Activated CD4-positive, alpha-beta T cell treated with anti-CD3 and anti-CD28 coated beads, Interleukin-2, amount 10 ng/mL, durations not matched to agents 24 days and 14 days (primary cell): ENCODE measurements at regions of chr12 and their contacts with region 1.

Region 1: DNA sequence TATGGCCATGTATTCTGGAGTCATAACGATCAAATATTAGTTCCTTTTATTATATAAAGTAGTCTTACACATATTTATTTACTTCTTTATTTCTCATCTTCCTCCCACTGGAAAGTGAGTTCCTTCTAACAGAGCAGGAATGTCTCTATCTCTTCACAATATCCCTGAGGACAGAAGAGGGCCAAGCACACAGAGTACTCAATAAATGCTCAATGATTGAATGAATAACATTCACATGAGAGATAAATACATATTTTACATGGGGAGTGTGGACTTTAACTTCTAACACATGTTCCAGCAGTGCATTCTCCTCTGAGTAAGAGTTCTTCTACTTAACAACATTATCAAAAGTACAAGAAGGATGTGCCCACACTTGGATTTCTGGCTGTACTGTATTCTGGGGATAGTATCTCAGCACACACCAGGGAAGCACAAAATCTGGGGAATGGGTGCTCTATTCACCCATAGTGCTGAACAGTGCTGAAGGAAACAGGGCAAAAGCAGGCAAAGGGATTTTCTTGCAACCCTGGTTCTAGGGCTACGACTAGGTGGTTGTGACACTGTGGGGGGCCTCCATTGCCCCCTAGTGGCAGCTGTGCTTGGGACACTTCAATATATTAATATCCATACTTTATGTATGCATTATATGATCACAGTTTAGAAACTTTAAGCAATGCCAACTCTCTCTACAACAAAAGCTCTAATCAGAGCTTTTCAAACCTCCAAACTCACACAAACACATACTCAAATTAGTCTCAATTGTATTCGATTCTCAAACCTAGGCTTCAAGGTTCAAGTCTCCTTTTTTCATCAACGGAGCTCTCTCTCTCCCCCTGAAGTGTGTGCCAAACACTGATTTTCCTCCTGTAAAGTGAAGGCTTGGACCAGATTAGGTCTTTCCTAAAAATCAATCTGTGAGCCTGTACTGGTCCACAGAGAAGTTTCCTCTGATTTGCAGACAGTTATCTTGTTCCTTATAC is 115.5 kb downstream of the SLC2A13 start:
- DNase-seq: peak; percentile 83
- H3K4me3 Mint-ChIP-seq: no peak overlapping the region
- H3K27ac Mint-ChIP-seq: no peak overlapping the region
- H3K4me1 Mint-ChIP-seq: no peaks in the 10 kb centered on the region
- H3K27me3 Mint-ChIP-seq: peaks cover 4% of the 10 kb centered on the region

Region 2: DNA sequence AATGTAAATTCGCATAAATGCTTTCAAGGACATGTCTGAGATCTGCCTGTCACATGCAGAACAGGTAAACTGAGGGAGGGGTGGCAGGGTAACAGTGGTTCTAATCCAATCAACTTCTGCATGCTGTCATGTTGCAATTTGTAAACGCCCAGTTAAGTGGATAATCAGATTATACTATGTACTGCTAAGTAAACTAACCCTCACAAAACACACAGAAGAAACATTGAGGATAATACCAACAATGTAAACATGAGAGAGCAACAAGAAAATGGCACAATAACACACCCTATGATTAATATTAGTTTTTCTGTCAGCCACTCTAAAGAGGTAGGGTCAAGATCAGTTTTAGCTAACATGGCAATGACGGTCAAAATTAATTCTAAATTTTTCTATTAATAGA is 671.2 kb before region 1 on chr12:
- intact Hi-C with region 1: loop called (anchors 10 kb)
- DNase-seq: no peak
- H3K4me3 Mint-ChIP-seq: no peak overlapping the region
- H3K27ac Mint-ChIP-seq: no peak overlapping the region
- H3K4me1 Mint-ChIP-seq: no peaks in the 10 kb centered on the region
- H3K27me3 Mint-ChIP-seq: no peaks in the 10 kb centered on the region

Region 3: DNA sequence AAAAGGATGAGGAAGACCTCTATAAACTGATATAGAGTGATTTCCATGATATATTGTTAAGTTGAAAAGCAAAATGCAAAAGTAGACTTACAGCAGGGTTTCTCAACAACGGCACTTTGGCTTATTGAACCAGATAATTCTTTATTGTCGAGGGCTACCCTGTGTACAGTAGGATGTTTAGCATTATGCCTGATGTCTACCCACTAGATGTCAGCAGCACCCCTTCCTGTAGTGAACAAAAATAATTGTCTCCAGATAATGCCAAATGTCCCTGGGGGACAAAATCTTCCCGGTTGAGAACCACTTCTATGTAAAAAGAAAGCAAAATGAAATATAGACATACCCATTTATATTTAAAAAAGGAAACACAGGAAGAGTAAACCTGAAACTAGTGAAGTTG is 403.2 kb before region 1 on chr12:
- intact Hi-C with region 1: loop called (anchors 5 kb)
- DNase-seq: peak; percentile 66
- H3K4me3 Mint-ChIP-seq: no peak overlapping the region
- H3K27ac Mint-ChIP-seq: no peak overlapping the region
- H3K4me1 Mint-ChIP-seq: peaks cover 12% of the 10 kb centered on the region
- H3K27me3 Mint-ChIP-seq: no peaks in the 10 kb centered on the region

Region 4: GRCh38 chr12:39764944-39765560 is 225.4 kb before region 1 on chr12:
- intact Hi-C with region 1: loop called (anchors 1 kb)
- DNase-seq: no peak
- H3K4me3 Mint-ChIP-seq: no peak overlapping the region
- H3K27ac Mint-ChIP-seq: no peak overlapping the region
- H3K4me1 Mint-ChIP-seq: no peaks in the 10 kb centered on the region
- H3K27me3 Mint-ChIP-seq: peaks cover 4% of the 10 kb centered on the region

Region 5: GRCh38 chr12:40107098-40107802 is 116.8 kb after region 1 on chr12:
- intact Hi-C with region 1: no loop called
- DNase-seq: peak; percentile 95
- H3K4me3 Mint-ChIP-seq: peak overlapping the region; percentile 63
- H3K27ac Mint-ChIP-seq: no peak overlapping the region
- H3K4me1 Mint-ChIP-seq: peaks cover 31% of the 10 kb centered on the region
- H3K27me3 Mint-ChIP-seq: peaks cover 30% of the 10 kb centered on the region